Heart left ventricle (tissue), 16 donors: ENCODE measurements at regions of chr14 and their contacts with region 1.

Region 1: GRCh38 chr14:74018586-74019407 is at the starts of genes BBOF1 and ENTPD5:
- DNase-seq: peak; percentile 87 to 94 (median 89)
- ATAC-seq: peak; percentile 93 to 99 (median 96)
- H3K4me3 ChIP-seq: peak within 1 kb of the TSS; percentile 45 to 98 (median 80)
- H3K27ac ChIP-seq: peak within 1 kb of the TSS; percentile 82 to 100 (median 97)
- H3K4me1 ChIP-seq: peaks cover 0 to 17% (median 9%) of the 10 kb centered on the region in 12 donors
- H3K27me3 ChIP-seq: no peaks in the 10 kb centered on the region
- CTCF ChIP-seq: peak in 2 of 12 donors; percentile 15 to 20
- POLR2A ChIP-seq: peak; percentile 42 to 90
- total RNA-seq, gene BBOF1: 2.1 to 8.9 (median 4.0) TPM
- total RNA-seq, gene ENTPD5: 5.5 to 12.3 (median 6.8) TPM

Region 2: GRCh38 chr14:73886449-73887317 is 132.1 kb before region 1 on chr14 and contains the start of gene ZNF410:
- intact Hi-C with region 1: loop called in 1 of 10 experiments (anchors 10 kb)
- DNase-seq: peak; percentile 94 to 97 (median 96)
- ATAC-seq: peak; percentile 99 to 100 (median 100)
- H3K4me3 ChIP-seq: peak within 1 kb of the TSS; percentile 54 to 97 (median 90)
- H3K27ac ChIP-seq: peak within 1 kb of the TSS; percentile 83 to 98 (median 94)
- H3K4me1 ChIP-seq: peaks cover 0 to 34% (median 19%) of the 10 kb centered on the region in 12 donors
- H3K27me3 ChIP-seq: no peaks in the 10 kb centered on the region
- CTCF ChIP-seq: no peak
- POLR2A ChIP-seq: peak in 1 of 2 donors; percentile 74
- total RNA-seq, gene ZNF410: 14.7 to 29.0 (median 20.1) TPM

Region 3: DNA sequence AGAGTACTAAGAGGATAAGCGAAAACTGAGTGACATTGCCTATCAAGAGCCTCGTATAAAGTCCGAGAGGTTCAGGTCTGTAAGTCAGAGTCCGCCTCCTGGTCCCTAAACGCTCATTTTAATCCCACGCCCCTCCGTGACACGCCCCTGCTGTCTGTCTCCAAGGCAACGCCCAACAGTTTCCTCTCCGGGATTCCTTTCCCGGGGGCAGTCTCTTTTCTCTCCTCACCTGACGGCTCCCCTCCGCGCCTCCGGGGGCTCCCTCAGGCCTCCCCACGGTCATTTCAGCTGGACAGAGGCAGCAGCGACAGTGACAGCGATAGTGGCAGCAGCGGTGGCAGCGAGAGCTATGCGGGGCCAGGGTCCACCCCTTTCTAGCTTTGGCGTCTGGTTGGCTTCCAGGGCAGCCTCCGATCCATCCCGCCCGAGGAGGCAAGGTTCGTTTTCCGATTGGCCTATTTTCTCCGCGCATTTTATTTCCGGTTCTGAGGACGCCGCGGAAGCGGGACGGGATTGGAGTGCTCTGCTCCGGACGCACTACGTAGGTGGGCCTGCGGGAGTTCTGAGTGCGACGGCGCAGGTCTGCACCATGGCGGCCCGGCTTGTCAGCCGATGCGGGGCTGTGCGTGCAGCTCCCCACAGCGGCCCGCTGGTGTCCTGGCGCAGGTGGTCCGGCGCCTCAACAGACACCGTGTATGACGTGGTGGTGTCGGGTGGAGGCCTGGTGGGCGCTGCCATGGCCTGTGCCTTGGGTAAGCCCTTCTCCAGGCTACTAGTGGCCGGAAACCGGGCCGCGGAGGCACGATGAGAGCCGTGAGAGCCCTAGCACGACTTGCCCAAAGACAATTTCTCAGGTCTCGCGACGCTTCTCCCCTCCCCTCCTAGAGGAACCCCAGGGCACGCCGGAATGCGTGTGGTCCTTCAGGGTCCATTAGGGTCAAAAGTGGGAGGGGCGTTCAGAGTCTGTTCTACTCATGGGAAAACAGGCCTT is 68.8 kb before region 1 on chr14 and contains the starts of genes COQ6 and FAM161B:
- intact Hi-C with region 1: loop called in 3 of 10 experiments (anchors 1 to 10 kb)
- DNase-seq: peak; percentile 94 to 97 (median 95)
- ATAC-seq: peak; percentile 98 to 99 (median 99)
- H3K4me3 ChIP-seq: peak within 1 kb of the TSS; percentile 62 to 99 (median 76)
- H3K27ac ChIP-seq: peak within 1 kb of the TSS; percentile 66 to 96 (median 92)
- H3K4me1 ChIP-seq: peaks cover 4 to 19% (median 12%) of the 10 kb centered on the region in 12 donors
- H3K27me3 ChIP-seq: no peaks in the 10 kb centered on the region
- CTCF ChIP-seq: peak in 4 of 12 donors; percentile 3 to 23 (median 11)
- POLR2A ChIP-seq: peak in 1 of 2 donors; percentile 75
- total RNA-seq, gene COQ6: 30.4 to 115 (median 48.4) TPM
- total RNA-seq, gene FAM161B: 2.8 to 6.5 (median 3.6) TPM

Region 4: DNA sequence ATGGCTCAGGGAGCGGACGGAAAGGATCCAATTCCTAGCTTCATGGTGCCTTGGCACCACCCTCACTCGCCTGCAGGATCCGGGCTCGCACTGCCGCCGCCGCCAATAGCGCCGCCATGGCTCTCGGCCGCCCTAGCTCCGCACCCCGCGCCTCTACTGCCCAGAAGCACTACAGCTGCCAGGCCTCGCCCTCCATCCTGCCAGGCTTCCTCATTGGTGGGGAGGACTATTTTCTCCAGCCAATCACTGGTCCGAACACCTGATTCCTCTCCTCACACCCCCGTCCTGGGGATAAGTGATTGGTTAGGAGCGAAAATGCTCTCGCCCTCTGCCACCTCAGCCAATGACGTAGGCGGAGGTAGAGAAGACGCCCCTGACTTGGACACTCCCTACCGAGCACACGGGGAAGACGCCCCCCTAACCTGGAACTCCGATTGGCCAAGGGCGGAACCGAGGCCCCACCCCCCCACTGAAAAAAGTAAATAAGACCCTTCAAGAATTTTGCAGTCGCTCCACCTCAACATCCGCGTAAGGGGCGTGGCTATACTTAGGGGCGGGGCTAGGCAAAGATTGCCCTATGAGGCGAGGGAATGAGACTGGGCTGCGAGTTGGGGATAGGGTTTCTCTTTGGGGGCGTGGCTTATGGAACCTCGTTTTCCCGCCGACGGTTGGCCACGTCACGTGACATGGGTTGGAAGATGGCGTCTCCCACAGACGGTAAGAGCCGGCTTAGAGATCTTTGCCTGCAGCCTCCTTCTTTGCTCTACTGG is 65.7 kb after region 1 on chr14 and contains the starts of genes ALDH6A1 and LIN52:
- intact Hi-C with region 1: loop called in 2 of 10 experiments (anchors 2 to 5 kb)
- DNase-seq: peak; percentile 96 to 99 (median 99)
- ATAC-seq: peak; percentile 97 to 98 (median 98)
- H3K4me3 ChIP-seq: peak within 1 kb of the TSS; percentile 59 to 90 (median 81)
- H3K27ac ChIP-seq: peak within 1 kb of the TSS; percentile 53 to 94 (median 81)
- H3K4me1 ChIP-seq: peaks cover 0 to 43% (median 20%) of the 10 kb centered on the region in 12 donors
- H3K27me3 ChIP-seq: no peaks in the 10 kb centered on the region
- CTCF ChIP-seq: peak in 2 of 12 donors; percentile 5 to 37
- POLR2A ChIP-seq: peak; percentile 65 to 91
- total RNA-seq, gene ALDH6A1: 39.0 to 103 (median 71.3) TPM
- total RNA-seq, gene LIN52: 4.2 to 14.5 (median 8.9) TPM